Activated CD8-positive, alpha-beta T cell treated with anti-CD3 and anti-CD28 coated beads, Interleukin-2, amount 10 ng/mL, durations not matched to agents 7 days and 5 days (primary cell): ENCODE measurements at regions of chr4 and their contacts with region 1.

Region 1: GRCh38 chr4:10461091-10461849 is 4.0 kb upstream of the ZNF518B start:
- DNase-seq: peak; percentile 79
- ATAC-seq: peak; percentile 86
- H3K4me3 Mint-ChIP-seq: peak overlapping the region; percentile 73
- H3K27ac Mint-ChIP-seq: no peak overlapping the region
- H3K4me1 Mint-ChIP-seq: peaks cover 33% of the 10 kb centered on the region
- H3K27me3 Mint-ChIP-seq: peaks cover 38% of the 10 kb centered on the region

Region 2: DNA sequence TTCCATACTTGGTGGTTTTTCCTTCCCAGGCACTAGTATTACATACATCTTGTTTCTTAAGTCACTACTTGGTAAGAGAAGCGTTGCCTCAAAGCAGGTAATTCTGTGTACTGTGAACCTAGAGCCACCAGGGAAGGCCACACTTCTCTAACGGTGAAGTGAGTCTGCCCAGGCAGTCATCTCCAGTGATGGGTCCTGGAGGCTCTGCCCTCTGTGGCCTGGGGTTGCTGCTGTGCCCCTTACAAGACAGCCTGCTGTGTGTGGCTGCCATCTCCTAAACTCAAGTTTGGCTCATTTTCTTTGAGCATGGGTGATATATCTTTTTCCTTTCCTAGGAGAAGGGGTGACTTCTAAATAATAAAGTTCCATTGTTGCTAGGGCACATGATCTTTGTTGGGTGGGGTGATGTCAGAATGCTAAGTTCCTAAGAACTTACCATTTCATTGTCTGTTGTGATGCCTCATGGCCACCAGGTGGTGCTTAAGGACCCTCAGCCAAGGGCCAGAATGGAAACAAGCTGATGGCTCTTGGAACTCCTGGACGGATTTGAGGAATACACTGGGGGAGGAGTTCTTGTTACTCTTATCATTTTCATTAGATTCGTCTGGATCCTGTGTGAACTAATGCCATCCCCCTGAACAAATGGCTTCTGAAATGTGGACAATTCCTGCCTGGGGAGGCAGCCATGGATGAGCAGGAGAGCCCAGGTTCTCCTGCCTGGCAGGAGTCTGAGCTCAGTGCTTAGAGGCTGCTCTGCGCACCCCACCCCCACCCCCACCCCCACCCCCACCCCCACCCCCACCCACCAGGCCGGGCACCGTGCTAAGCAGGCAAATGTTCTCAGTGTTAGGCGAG is 303.6 kb before region 1 on chr4:
- CTCF ChIA-PET with region 1: interaction called, 19 read pairs
- POLR2A ChIA-PET with region 1: no interaction called
- DNase-seq: peak; percentile 59
- ATAC-seq: peak; percentile 40
- H3K4me3 Mint-ChIP-seq: no peak overlapping the region
- H3K27ac Mint-ChIP-seq: no peak overlapping the region
- H3K4me1 Mint-ChIP-seq: peaks cover 38% of the 10 kb centered on the region
- H3K27me3 Mint-ChIP-seq: peaks cover 7% of the 10 kb centered on the region

Region 3: DNA sequence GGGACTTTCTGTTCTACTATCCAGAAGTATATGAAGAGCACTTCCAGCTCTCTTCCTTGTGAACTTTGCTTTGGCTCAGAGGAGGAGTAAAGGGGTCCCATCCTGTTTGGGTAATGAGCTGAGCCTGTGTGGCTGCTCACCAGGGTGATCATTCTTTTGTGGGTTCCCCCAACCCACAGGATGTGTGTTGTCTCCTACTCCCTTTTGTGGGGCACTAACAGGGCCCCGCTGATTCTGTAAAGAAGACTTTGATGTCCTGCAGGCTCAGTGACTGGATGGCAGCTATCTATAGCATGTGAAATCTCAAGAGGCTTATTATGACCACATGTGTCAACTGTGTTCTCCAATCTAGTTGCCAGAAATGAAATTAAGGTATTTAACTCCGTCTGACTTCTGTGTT is 44.8 kb before region 1 on chr4:
- CTCF ChIA-PET with region 1: interaction called, 16 read pairs
- POLR2A ChIA-PET with region 1: interaction called, 6 read pairs
- DNase-seq: peak; percentile 85
- ATAC-seq: peak; percentile 92
- H3K4me3 Mint-ChIP-seq: peak overlapping the region; percentile 34
- H3K27ac Mint-ChIP-seq: peak overlapping the region; percentile 64
- H3K4me1 Mint-ChIP-seq: peaks cover 46% of the 10 kb centered on the region
- H3K27me3 Mint-ChIP-seq: peaks cover 3% of the 10 kb centered on the region

Region 4: GRCh38 chr4:10442976-10443375 is 18.3 kb before region 1 on chr4:
- CTCF ChIA-PET with region 1: interaction called, 14 read pairs
- POLR2A ChIA-PET with region 1: no interaction called
- DNase-seq: no peak
- ATAC-seq: no peak
- H3K4me3 Mint-ChIP-seq: no peak overlapping the region
- H3K27ac Mint-ChIP-seq: no peak overlapping the region
- H3K4me1 Mint-ChIP-seq: no peaks in the 10 kb centered on the region
- H3K27me3 Mint-ChIP-seq: no peaks in the 10 kb centered on the region

Region 5: GRCh38 chr4:10554694-10555093 is 93.4 kb after region 1 on chr4:
- CTCF ChIA-PET with region 1: interaction called, 11 read pairs
- POLR2A ChIA-PET with region 1: no interaction called
- DNase-seq: peak; percentile 64
- ATAC-seq: peak; percentile 36
- H3K4me3 Mint-ChIP-seq: no peak overlapping the region
- H3K27ac Mint-ChIP-seq: no peak overlapping the region
- H3K4me1 Mint-ChIP-seq: no peaks in the 10 kb centered on the region
- H3K27me3 Mint-ChIP-seq: peaks cover 16% of the 10 kb centered on the region

Region 6: GRCh38 chr4:10998831-10999230 is 537.6 kb after region 1 on chr4:
- CTCF ChIA-PET with region 1: no interaction called
- POLR2A ChIA-PET with region 1: no interaction called
- DNase-seq: no peak
- ATAC-seq: no peak
- H3K4me3 Mint-ChIP-seq: no peak overlapping the region
- H3K27ac Mint-ChIP-seq: no peak overlapping the region
- H3K4me1 Mint-ChIP-seq: no peaks in the 10 kb centered on the region
- H3K27me3 Mint-ChIP-seq: no peaks in the 10 kb centered on the region